Dendritic cell treated with granulocyte-macrophage colony-stimulating factor and Interleukin-4, amounts not matched to agents 40 ng/mL and 50 ng/mL, for 4 days (primary cell): ENCODE measurements at regions of chr16 and their contacts with region 1.

Region 1: GRCh38 chr16:58591083-58591482 is 38.5 kb downstream of the CNOT1 start:
- H3K4me3 Mint-ChIP-seq: no peak overlapping the region
- H3K27ac Mint-ChIP-seq: no peak overlapping the region
- H3K4me1 Mint-ChIP-seq: peaks cover 12% of the 10 kb centered on the region
- H3K27me3 Mint-ChIP-seq: no peaks in the 10 kb centered on the region

Region 2: GRCh38 chr16:58661199-58661830 is 70.2 kb after region 1 on chr16:
- intact Hi-C with region 1: loop called (anchors 10 kb)
- H3K4me3 Mint-ChIP-seq: no peak overlapping the region
- H3K27ac Mint-ChIP-seq: no peak overlapping the region
- H3K4me1 Mint-ChIP-seq: peaks cover 10% of the 10 kb centered on the region
- H3K27me3 Mint-ChIP-seq: no peaks in the 10 kb centered on the region